PC-3 (cell line): ENCODE measurements at regions of chr1 and their contacts with region 1.

Region 1: GRCh38 chr1:173202430-173203145 is 4.5 kb downstream of the TNFSF4 start:
- DNase-seq: peak; percentile 98
- ATAC-seq: peak; percentile 93
- H3K4me3 ChIP-seq: no peak overlapping the region
- H3K27ac ChIP-seq: no peak overlapping the region
- H3K4me1 ChIP-seq: 0 out of 2 replicates have a peak, but pooled peaks cover 4% of the 10 kb centered on the region
- H3K27me3 ChIP-seq: no peaks in the 10 kb centered on the region
- CTCF ChIP-seq: peak; percentile 100

Region 2: GRCh38 chr1:172863031-172863430 is 339.6 kb before region 1 on chr1:
- CTCF ChIA-PET with region 1: no interaction called
- POLR2A ChIA-PET with region 1: no interaction called
- intact Hi-C with region 1: loop called (anchors 1 kb)
- DNase-seq: peak; percentile 30
- ATAC-seq: no peak
- H3K4me3 ChIP-seq: no peak overlapping the region
- H3K27ac ChIP-seq: no peak overlapping the region
- H3K4me1 ChIP-seq: peaks cover 9% of the 10 kb centered on the region
- H3K27me3 ChIP-seq: no peaks in the 10 kb centered on the region
- CTCF ChIP-seq: no peak

Region 3: DNA sequence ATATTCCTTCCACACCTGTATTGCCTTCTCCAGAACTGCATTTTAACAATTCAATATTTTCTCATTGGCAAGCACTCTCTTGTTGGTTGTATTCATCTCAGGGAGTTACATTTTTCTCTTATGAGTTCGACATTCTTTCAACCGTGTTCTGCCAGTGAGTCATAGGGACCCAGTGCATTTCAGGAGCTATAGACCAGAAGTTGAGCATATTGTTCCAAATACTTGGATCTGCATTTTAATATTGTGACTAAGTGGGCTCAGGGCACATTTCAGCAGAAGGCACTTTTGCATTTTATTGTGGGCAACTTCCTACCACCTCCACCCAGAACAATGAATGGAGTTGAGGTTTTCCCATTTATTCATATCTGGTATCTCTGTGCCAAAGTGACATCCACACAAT is 284.6 kb before region 1 on chr1:
- CTCF ChIA-PET with region 1: interaction called, 3 read pairs
- POLR2A ChIA-PET with region 1: interaction called, 3 read pairs
- intact Hi-C with region 1: loop called (anchors 5 kb)
- DNase-seq: peak; percentile 100
- ATAC-seq: peak; percentile 89
- H3K4me3 ChIP-seq: peak overlapping the region; percentile 4; the same call in 1 of the 2 replicates
- H3K27ac ChIP-seq: peak overlapping the region; percentile 72
- H3K4me1 ChIP-seq: peaks cover 63% of the 10 kb centered on the region
- H3K27me3 ChIP-seq: no peaks in the 10 kb centered on the region
- CTCF ChIP-seq: no peak

Region 4: DNA sequence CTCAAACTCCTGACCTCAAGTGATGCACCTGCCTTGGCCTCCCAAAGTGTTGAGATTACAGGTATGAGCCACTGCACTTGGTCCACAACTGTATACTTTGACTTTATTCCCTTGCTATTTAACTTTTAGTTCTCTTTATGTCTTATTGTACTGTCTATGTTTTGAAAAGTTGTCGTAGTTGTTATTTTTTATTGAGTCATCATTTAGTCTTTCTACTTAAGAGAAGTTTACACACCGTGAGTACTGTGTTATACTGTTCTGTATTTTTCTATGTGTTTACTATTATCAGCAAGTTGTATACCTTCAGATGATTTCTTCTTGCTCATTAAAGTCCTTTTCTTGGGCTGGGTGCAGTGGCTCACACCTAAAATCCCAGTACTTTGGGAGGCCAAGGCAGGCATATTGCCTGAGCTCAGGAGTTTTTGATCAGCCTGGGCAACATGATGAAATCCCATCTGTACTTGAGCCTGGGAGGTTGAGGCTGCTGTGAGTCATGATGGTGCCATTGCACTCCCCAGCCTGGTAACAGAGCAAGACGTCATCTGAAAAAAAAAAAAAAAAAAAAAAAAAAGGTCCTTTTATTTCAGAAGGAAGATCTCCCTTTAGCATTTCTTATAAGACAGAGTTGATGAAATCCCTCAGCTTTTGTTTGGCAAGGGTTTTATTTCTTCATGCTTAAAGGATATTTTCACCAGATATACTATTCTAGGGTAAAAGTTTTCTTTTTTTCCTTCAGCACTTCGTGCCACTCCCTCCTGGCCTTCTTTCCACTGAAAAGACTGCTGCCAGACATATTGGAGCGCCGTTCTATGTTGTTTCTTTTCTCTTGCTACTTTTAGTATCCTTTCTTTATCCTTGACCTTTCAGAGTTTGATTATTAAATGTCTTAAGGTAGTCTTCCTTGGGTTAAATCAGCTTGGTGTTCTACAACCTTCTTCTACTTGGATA is 199.4 kb before region 1 on chr1:
- CTCF ChIA-PET with region 1: no interaction called
- POLR2A ChIA-PET with region 1: no interaction called
- intact Hi-C with region 1: loop called (anchors 10 kb)
- DNase-seq: peak; percentile 49
- ATAC-seq: no peak
- H3K4me3 ChIP-seq: no peak overlapping the region
- H3K27ac ChIP-seq: no peak overlapping the region
- H3K4me1 ChIP-seq: 0 out of 2 replicates have a peak, but pooled peaks cover under 1% of the 10 kb centered on the region
- H3K27me3 ChIP-seq: no peaks in the 10 kb centered on the region
- CTCF ChIP-seq: no peak

Region 5: GRCh38 chr1:173062156-173062938 is 140.2 kb before region 1 on chr1:
- CTCF ChIA-PET with region 1: interaction called, 6 read pairs
- POLR2A ChIA-PET with region 1: no interaction called
- intact Hi-C with region 1: loop called (anchors 1 kb)
- DNase-seq: peak; percentile 100
- ATAC-seq: peak; percentile 100
- H3K4me3 ChIP-seq: no peak overlapping the region
- H3K27ac ChIP-seq: peak overlapping the region; percentile 43
- H3K4me1 ChIP-seq: peaks cover 36% of the 10 kb centered on the region
- H3K27me3 ChIP-seq: no peaks in the 10 kb centered on the region
- CTCF ChIP-seq: no peak